ENCODE measurements at regions of chr2 and their contacts with region 1.

Region 1: GRCh38 chr2:24827321-24828237 is 34.4 kb downstream of the CENPO start:
- DNase-seq: peak; percentile 72 to 95 (median 90)

Region 2: DNA sequence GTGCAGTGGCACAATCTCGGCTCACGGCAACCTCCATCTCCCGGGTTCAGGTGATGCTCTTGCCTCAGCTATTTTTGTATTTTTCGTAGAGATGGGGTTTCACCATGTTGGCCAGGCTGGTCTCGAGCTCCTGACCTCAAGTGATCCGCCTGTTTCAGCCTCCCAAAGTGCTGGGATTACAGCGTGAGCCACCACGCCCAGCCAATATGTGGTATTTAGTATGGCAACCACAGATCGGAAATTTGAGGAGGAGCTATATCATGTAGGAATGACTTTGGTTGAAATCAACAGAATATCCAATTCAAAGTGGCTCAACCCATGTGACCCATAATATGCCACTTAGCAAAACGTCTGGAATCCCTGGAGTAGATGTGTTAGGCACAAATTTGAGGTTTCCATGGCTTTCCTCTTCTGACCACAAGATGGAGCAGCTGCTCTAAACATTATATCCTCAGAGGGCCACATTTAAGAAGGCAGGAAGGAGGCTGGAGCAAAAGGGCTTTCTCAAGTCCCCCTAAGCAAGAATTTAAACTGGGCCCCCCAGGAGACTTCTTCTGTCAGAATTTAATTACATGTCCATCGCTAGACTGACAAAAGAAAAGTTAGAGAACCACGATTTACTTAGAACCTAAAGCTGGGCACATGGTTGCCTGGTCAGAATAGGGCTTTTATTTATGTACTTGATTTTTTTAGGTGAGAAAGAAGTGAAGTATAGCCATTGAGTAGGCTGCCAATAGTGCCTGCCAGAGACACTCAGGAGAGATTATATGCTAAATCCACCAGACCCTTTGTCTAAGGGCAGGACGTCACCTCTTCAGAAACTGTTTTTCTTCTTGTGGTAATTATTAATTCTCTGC is 417.7 kb before region 1 on chr2:
- intact Hi-C with region 1: loop called (anchors 2 kb)
- DNase-seq: peak in 31 of 42 donors; percentile 9 to 83 (median 51)

Region 3: GRCh38 chr2:24490674-24491625 is 336.6 kb before region 1 on chr2 and contains the start of gene NCOA1:
- intact Hi-C with region 1: loop called (anchors 10 kb)
- DNase-seq: peak; percentile 72 to 97 (median 91)